Left colon (tissue), 2 donors: ENCODE measurements at regions of chr6 and their contacts with region 1.

Region 1: GRCh38 chr6:13908955-13909381 is 15.8 kb upstream of the RNF182 start:
- DNase-seq: peak; percentile 15 to 29
- ATAC-seq: peak; percentile 81

Region 2: GRCh38 chr6:13397359-13398068 is 511.5 kb before region 1 on chr6:
- intact Hi-C with region 1: no loop called
- DNase-seq: peak; percentile 75 to 83
- ATAC-seq: peak; percentile 86

Region 3: GRCh38 chr6:14089224-14089623 is 180.3 kb after region 1 on chr6:
- intact Hi-C with region 1: no loop called
- DNase-seq: no peak
- ATAC-seq: no peak

Region 4: DNA sequence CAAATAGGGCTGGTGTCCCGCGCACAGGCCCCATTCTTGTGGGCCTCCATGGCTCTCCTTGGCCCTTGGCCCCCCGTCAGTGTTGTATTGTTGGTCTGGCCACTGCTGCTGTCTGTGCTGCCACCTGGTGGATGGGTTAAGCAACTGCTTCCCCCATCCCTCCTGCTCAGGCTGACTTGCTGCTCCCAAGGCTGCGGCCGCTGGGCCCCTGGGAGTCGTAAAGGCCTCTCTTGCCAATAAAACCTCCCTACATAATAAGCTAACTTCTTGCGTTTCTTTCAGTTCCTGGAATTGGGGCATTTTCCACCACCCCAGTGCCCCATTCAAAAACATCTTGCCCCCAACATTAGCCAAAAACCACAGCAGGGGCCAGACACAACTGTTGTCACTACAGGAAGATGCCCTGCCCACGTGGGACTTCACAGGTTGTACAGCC is 235.7 kb after region 1 on chr6:
- intact Hi-C with region 1: loop called in 1 of 2 experiments (anchors 5 kb)
- DNase-seq: peak; percentile 46 to 57
- ATAC-seq: peak; percentile 82

Region 5: GRCh38 chr6:14381829-14382677 is 473.1 kb after region 1 on chr6:
- intact Hi-C with region 1: no loop called
- DNase-seq: no peak
- ATAC-seq: no peak